BJ (cell line): ENCODE measurements at regions of chr11 and their contacts with region 1.

Region 1: DNA sequence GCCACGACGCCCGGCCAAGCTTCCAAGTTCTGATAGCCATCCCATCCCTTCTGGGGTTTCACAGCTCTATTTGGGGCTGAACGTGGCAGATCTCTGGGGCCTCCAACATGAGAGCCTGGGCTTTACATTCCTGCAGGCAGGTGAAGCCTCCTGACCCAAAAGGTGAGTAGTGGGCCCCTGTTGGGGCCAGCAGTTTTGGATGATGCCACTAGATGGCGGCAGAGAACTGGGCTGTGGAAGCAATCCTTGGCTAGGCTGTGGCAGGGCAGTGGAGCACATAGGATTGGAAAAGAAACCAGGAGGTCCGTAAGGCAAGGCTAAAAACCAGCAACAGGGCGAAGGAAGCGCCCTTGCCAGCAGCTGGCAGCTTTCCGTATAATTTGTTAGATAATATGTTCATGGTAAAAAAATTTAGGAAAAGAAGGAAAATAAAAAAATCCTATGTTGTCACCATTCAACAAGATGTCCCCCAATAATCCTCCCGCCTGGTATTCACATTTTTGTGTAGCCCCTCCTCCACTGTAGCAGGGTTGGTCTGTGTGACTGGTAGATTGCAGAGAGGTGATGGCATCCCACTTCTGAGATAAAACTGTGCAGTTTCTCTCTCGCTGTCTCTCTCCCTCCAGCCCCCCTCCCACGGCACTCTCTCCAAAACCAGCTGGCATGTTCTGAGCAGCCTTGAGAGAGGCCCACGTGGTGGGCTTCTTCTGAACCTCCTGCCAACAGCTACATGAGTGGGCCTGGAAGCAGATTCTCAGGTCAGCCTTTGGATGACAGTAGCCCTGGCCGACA is 43.6 kb upstream of the OR4B1 start:
- DNase-seq: no peak
- H3K4me3 ChIP-seq: no peak overlapping the region
- H3K27me3 ChIP-seq: no peaks in the 10 kb centered on the region
- CTCF ChIP-seq: peak; percentile 99

Region 2: GRCh38 chr11:48184446-48184845 is 11.4 kb after region 1 on chr11:
- CTCF ChIA-PET with region 1: interaction called, 19 read pairs
- POLR2A ChIA-PET with region 1: no interaction called
- DNase-seq: no peak
- H3K4me3 ChIP-seq: no peak overlapping the region
- H3K27me3 ChIP-seq: no peaks in the 10 kb centered on the region
- CTCF ChIP-seq: no peak